CD4-positive, alpha-beta memory T cell (primary cell): ENCODE measurements at regions of chr10 and their contacts with region 1.

Region 1: GRCh38 chr10:131874991-131875451 is 25.8 kb upstream of the PPP2R2D start:
- DNase-seq: peak in 4 of 5 donors; percentile 20 to 29 (median 25)
- H3K4me3 ChIP-seq: no peak overlapping the region
- H3K4me3 Mint-ChIP-seq: no peak overlapping the region
- H3K27ac ChIP-seq: no peak overlapping the region
- H3K27ac Mint-ChIP-seq: no peak overlapping the region
- H3K4me1 ChIP-seq: no peaks in the 10 kb centered on the region
- H3K4me1 Mint-ChIP-seq: peaks cover 0 to 5% (median 3%) of the 10 kb centered on the region in 4 donors
- H3K27me3 ChIP-seq: no peaks in the 10 kb centered on the region
- H3K27me3 Mint-ChIP-seq: peaks cover 13 to 32% of the 10 kb centered on the region in 2 donors

Region 2: GRCh38 chr10:131242007-131242406 is 633.0 kb before region 1 on chr10:
- CTCF ChIA-PET with region 1: no interaction called
- POLR2A ChIA-PET with region 1: no interaction called
- intact Hi-C with region 1: loop called (anchors 10 kb)
- DNase-seq: no peak
- H3K4me3 ChIP-seq: no peak overlapping the region
- H3K4me3 Mint-ChIP-seq: no peak overlapping the region
- H3K27ac ChIP-seq: no peak overlapping the region
- H3K27ac Mint-ChIP-seq: no peak overlapping the region
- H3K4me1 ChIP-seq: no peaks in the 10 kb centered on the region
- H3K4me1 Mint-ChIP-seq: no peaks in the 10 kb centered on the region
- H3K27me3 ChIP-seq: no peaks in the 10 kb centered on the region
- H3K27me3 Mint-ChIP-seq: peaks cover 0 to 4% of the 10 kb centered on the region in 2 donors

Region 3: DNA sequence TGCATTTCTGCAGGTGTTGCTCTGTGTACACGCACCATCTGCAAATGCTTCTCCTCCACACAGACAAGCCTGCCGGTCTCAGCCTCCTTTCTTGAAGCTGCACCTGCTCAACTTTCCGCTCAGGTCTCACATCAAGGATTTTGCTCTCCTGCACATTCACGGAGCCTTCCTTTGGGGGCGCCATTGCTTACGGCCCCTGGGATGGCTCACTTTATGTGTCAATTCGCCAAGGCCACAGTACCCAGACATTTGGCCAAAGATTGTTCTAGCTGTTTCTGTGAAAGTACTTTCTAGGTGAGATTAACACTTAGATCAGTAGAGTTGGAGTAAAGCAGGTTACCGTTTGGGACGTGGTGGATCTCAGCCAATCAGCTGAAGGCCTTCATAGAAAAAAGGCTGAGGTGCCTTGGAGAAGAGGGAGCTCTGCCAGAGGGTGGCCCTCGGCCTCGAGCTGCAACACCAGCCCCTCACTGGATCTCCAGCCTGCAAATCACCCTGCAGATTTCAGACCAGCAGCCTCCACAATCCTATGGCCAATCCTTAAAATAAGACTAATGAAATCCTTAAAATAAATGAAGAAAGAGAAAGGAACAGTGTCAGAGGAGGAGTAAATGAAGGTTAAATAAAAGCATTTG is 14.1 kb before region 1 on chr10:
- CTCF ChIA-PET with region 1: no interaction called
- POLR2A ChIA-PET with region 1: no interaction called
- intact Hi-C with region 1: no loop called
- DNase-seq: no peak
- H3K4me3 ChIP-seq: no peak overlapping the region
- H3K4me3 Mint-ChIP-seq: peak overlapping the region in 1 of 8 donors; percentile 27
- H3K27ac ChIP-seq: no peak overlapping the region
- H3K27ac Mint-ChIP-seq: no peak overlapping the region
- H3K4me1 ChIP-seq: no peaks in the 10 kb centered on the region
- H3K4me1 Mint-ChIP-seq: no peaks in the 10 kb centered on the region
- H3K27me3 ChIP-seq: peaks cover 4% of the 10 kb centered on the region
- H3K27me3 Mint-ChIP-seq: peaks cover 13 to 22% of the 10 kb centered on the region in 2 donors